ENCODE measurements at regions of chr4 and their contacts with region 1.

Region 1: DNA sequence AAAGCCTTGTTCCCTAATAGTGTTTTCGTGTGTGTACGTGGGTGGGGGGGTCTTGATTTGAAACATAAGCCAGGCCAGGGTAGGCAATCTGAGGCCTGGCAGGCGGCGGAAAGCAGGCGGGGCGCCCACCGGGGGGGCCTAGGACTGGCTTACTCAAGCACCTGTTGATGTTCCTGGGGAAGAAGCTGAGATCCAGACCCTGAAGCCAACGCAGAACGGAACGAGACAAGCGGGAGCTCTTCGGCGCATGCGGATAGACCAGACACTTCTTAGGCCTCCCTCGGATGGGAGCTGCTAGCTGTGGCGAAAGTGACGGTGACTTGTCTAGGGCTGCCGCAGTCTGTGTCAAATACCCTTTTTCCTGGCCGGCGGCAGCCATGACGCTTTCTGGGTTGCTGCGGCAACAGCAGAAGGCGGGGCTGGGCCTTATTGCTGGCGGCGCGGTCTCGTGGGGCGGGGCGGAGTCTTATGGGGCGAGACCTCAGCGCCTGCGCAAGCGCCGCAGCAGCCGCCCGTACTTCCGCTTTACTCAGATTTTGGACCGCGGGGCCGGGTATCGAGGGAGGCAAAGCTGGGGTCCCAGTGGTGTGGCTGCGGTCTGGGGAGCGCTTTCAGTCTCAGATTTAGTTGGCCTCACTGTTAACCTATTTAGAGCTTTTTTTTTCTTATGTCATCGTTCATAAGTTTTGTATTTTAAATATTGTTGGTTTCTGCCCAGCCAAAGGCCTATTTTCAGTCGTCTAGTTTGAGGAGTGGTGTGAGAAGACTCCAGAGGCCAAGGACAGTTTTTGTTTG is at the start of gene SPATA4:
- DNase-seq: peak; percentile 98
- ATAC-seq: peak; percentile 100
- total RNA-seq, gene SPATA4: not detected

Region 2: DNA sequence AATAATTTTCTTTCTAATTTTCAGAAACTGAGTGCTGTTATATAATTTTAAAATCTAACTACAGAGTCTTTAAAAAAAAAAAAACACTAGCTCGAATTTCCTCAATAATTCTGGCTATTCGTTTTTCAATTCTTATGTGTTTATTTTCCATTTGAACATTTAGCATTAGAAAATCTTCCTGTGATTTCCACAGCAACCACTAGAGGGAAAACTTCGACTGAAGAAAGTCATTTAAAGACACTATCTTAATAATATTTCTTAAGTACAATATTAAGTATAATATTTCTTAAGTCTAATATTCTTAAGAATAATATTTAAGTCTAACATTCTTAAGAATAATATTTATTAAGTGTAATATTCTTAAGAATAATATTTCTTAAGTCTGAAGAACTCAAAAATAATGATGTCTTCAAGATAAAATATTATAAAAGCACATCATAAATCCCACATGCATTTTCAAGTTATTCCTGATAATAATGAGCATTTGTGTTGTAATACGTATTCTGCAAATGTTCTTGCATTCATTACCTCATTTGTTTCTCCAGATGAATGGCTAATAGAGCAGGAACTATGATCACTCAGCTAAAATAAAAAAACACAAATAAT is 248.2 kb before region 1 on chr4:
- intact Hi-C with region 1: no loop called
- DNase-seq: no peak
- ATAC-seq: no peak

Region 3: GRCh38 chr4:176217510-176217909 is 22.1 kb after region 1 on chr4:
- intact Hi-C with region 1: no loop called
- DNase-seq: no peak
- ATAC-seq: no peak

Region 4: GRCh38 chr4:176238157-176238610 is 42.8 kb after region 1 on chr4:
- intact Hi-C with region 1: loop called (anchors 5 kb)
- DNase-seq: no peak
- ATAC-seq: peak; percentile 67

Region 5: GRCh38 chr4:176319704-176320339 is 124.4 kb after region 1 on chr4 and contains the start of gene SPCS3:
- intact Hi-C with region 1: loop called (anchors 2 kb)
- DNase-seq: peak; percentile 99
- ATAC-seq: peak; percentile 99
- total RNA-seq, gene SPCS3: 87.9 TPM